Psoas muscle (tissue), 8 donors: ENCODE measurements at regions of chr3 and their contacts with region 1.

Region 1: GRCh38 chr3:141311496-141312353 is 56.6 kb upstream of the ZBTB38 start:
- DNase-seq: peak; percentile 98 to 99
- ATAC-seq: peak; percentile 97 to 100 (median 98)
- H3K4me3 ChIP-seq: peak overlapping the region; percentile 88
- H3K27ac ChIP-seq: peak overlapping the region; percentile 86
- H3K4me1 ChIP-seq: no peaks in the 10 kb centered on the region
- H3K27me3 ChIP-seq: no peaks in the 10 kb centered on the region
- CTCF ChIP-seq: peak; percentile 72

Region 2: DNA sequence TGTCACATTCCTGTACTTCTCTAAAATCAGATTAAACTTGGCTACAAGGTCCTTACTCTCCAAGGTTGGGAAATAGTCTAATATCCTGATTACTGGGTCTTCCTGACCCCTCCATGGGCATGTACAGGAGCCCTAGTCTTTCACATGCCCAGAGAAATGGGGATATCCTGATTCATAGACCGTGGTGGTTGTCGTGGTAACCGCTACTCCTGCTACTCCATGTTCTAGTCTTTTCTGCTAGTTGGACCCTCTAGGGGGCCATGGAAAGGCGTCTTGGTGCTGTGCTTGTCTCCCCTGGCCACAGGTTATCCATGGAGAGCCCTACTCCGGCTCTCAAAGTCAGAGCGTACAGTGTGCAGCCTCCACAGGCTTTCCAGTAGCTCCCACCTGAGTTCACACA is 43.5 kb after region 1 on chr3:
- intact Hi-C with region 1: loop called in 1 of 2 experiments (anchors 5 kb)
- DNase-seq: no peak
- ATAC-seq: no peak
- H3K4me3 ChIP-seq: no peak overlapping the region
- H3K27ac ChIP-seq: no peak overlapping the region
- H3K4me1 ChIP-seq: no peaks in the 10 kb centered on the region
- H3K27me3 ChIP-seq: peaks cover 0 to 3% (median 0%) of the 10 kb centered on the region in 3 donors
- CTCF ChIP-seq: no peak

Region 3: GRCh38 chr3:141402476-141403171 is 90.9 kb after region 1 on chr3:
- intact Hi-C with region 1: no loop called
- DNase-seq: peak; percentile 80 to 87
- ATAC-seq: peak; percentile 78 to 82 (median 80)
- H3K4me3 ChIP-seq: peak overlapping the region; percentile 84
- H3K27ac ChIP-seq: peak overlapping the region; percentile 96
- H3K4me1 ChIP-seq: peaks cover 36% of the 10 kb centered on the region
- H3K27me3 ChIP-seq: no peaks in the 10 kb centered on the region
- CTCF ChIP-seq: no peak